ENCODE measurements at regions of chr9 and their contacts with region 1.

Region 1: GRCh38 chr9:83707768-83708514 is at the start of gene UBQLN1:
- DNase-seq: peak; percentile 93
- H3K4me3 Mint-ChIP-seq: peak within 1 kb of the TSS; percentile 99
- H3K27ac Mint-ChIP-seq: peak within 1 kb of the TSS; percentile 99
- H3K4me1 Mint-ChIP-seq: peaks cover 17% of the 10 kb centered on the region
- H3K27me3 Mint-ChIP-seq: no peaks in the 10 kb centered on the region
- CTCF ChIP-seq: no peak
- total RNA-seq, gene UBQLN1: 146 and 169 TPM in 2 replicates

Region 2: DNA sequence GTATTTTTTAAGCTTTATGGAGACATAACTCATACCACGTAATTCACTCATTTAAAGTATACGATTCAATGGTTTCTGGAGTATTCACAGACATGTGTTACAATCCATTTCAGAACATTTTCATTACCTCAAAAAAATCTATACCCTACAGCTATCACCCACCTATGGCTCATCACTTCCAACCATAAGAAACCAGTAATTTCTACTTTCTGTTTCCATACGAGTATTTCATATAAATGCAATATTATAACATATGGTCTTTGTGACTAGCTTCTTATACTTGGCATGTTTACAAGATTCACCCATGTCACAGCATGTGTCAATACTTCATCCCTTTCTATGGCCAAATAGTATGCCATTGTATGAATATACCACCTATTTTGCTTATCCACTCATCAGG is 19.0 kb before region 1 on chr9:
- CTCF ChIA-PET with region 1: no interaction called
- POLR2A ChIA-PET with region 1: interaction called, 19 read pairs
- intact Hi-C with region 1: no loop called
- DNase-seq: no peak
- H3K4me3 Mint-ChIP-seq: no peak overlapping the region
- H3K27ac Mint-ChIP-seq: no peak overlapping the region
- H3K4me1 Mint-ChIP-seq: peaks cover 37% of the 10 kb centered on the region
- H3K27me3 Mint-ChIP-seq: no peaks in the 10 kb centered on the region
- CTCF ChIP-seq: no peak

Region 3: DNA sequence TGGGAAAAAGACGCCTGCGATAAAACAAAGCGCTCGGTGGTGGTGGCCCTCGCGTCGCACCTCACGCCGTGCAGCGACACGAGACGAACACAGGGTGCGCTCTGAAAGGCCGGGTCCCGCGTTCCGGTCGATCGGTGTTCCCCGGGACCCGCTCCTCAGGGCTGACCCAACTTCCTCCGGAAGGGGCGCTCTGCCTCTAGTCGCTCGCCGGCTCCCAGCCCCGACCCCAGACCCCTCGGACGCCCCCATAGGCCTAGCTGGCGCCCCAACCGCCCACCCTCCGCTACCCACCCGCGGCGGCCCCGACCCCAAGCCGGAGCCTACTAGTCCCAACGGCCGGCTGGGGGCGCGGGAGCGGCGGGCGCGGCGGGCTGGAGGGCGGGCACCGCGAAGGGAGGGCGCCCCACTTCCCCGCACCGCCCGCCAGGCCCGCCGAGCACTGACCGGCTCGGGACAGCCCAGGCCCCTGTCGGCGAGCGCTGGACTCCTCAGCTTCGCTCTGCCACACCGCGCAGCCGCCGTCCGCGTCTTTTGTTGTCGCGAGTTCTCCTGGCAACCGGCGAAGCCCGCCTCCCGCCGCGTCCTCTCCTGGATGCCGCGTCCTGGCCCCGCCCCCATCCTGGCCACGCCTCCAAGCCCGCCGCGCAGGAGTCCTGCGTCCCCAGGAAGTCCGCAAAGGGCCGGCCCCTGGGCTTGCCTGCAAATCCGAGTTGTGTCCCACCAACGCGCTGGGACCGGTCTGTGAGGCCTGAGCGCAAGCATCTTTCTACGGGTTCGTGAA is 213.2 kb after region 1 on chr9 and contains the start of gene KIF27:
- CTCF ChIA-PET with region 1: no interaction called
- POLR2A ChIA-PET with region 1: interaction called, 16 read pairs
- intact Hi-C with region 1: no loop called
- DNase-seq: peak; percentile 96
- H3K4me3 Mint-ChIP-seq: peak within 1 kb of the TSS; percentile 77
- H3K27ac Mint-ChIP-seq: peak within 1 kb of the TSS; percentile 92
- H3K4me1 Mint-ChIP-seq: peaks cover 10% of the 10 kb centered on the region
- H3K27me3 Mint-ChIP-seq: no peaks in the 10 kb centered on the region
- CTCF ChIP-seq: peak; percentile 11
- total RNA-seq, gene KIF27: 9.4 and 10.0 TPM in 2 replicates

Region 4: DNA sequence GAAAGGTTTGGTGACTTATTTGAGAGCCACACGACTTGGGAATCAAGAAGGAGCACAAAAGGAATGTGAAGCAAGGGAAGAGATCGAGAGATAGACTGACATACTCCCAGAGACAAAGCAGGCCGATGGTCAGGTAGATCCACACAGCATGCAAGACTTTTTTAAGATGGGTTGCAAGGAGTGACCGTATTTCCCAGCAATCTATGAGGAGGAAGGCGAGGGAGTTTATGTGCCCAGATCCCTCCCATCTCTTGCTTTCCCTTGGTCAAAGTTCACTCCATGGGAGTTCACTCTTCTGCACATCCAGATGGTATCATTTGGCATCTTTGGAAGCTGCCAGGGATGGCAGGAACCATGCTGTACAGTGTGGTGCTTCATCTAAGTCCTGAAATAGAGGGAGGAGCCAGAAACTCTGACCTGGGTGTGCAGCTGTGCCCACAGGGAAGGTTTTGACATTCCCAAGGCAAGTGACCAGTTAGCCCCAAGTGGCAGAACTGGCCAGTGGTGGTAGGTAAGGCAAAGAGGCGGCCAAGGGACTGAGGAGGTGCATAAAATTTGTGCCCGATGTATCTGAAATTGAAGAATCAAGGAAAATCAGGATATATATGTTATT is 421.7 kb after region 1 on chr9:
- CTCF ChIA-PET with region 1: no interaction called
- POLR2A ChIA-PET with region 1: no interaction called
- intact Hi-C with region 1: no loop called
- DNase-seq: no peak
- H3K4me3 Mint-ChIP-seq: no peak overlapping the region
- H3K27ac Mint-ChIP-seq: no peak overlapping the region
- H3K4me1 Mint-ChIP-seq: peaks cover 9% of the 10 kb centered on the region
- H3K27me3 Mint-ChIP-seq: no peaks in the 10 kb centered on the region
- CTCF ChIP-seq: no peak